Right ventricle myocardium superior (tissue), 1 donor: ENCODE measurements at regions of chr2 and their contacts with region 1.

Region 1: GRCh38 chr2:47767880-47768609 is 14.9 kb upstream of the MSH6 start:
- DNase-seq: peak; percentile 82
- ATAC-seq: peak; percentile 88

Region 2: DNA sequence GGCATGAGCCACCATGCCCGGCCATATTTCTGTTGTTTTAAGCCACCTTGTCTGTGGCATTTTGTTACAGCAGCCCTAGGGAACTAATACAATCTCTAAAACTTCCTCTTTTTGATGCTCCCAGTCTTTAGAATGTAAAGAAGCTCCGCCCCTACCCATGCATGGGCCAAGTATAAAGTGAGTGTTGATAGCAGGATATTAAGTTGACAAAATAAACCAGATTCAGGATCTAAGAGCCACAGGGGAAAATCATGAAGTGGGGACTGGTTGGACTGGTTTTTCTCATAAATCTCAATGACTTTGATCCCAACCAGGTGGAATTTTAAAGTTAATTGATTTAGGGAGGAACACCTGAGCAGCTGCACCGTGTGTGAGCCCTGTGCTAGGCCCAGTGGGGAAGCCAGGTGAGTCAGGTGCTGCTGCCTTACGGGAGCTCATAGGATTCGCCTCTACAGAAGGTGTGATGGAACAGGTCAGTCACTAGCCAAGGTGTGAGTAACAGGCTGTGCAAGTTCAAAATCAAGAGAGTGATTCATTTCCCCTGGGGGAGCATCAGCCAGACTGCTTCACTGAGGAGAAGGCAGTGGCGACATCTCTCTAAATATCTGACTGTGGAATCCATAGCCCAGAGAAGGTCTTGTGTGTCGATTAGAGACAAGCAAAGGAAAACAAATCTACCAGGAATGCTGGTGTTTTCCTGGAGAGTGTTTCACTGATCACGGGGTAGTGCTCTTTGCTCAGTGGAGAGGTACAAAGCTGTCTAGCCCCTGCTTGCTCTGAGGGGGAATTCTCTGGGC is 428.1 kb before region 1 on chr2:
- intact Hi-C with region 1: loop called (anchors 10 kb)
- DNase-seq: no peak
- ATAC-seq: no peak

Region 3: DNA sequence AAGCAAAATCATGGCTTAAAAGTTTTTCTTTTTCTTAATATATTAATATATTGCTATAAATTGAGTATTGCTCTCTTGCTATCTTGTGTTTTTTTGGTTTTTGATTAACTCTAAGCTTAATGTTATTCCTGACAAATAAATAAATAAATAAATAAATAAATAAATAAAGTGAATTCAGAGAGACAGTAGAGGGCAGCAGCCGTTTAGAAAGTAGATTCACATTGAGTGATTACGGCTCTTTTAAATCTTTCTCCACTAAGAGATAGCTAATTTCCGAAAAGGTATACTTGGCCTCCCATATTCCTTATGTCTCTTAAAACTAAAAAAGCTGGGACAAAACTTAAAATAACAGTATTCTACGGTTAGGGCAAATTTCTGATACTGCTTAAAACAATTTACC is 330.8 kb before region 1 on chr2:
- intact Hi-C with region 1: loop called (anchors 2 kb)
- DNase-seq: no peak
- ATAC-seq: peak; percentile 74

Region 4: GRCh38 chr2:47833516-47833968 is 65.5 kb after region 1 on chr2:
- intact Hi-C with region 1: no loop called
- DNase-seq: no peak
- ATAC-seq: no peak

Region 5: GRCh38 chr2:48006094-48006493 is 238.0 kb after region 1 on chr2:
- intact Hi-C with region 1: no loop called
- DNase-seq: no peak
- ATAC-seq: no peak